Gastrocnemius medialis (tissue), 4 donors: ENCODE measurements at regions of chr11 and their contacts with region 1.

Region 1: DNA sequence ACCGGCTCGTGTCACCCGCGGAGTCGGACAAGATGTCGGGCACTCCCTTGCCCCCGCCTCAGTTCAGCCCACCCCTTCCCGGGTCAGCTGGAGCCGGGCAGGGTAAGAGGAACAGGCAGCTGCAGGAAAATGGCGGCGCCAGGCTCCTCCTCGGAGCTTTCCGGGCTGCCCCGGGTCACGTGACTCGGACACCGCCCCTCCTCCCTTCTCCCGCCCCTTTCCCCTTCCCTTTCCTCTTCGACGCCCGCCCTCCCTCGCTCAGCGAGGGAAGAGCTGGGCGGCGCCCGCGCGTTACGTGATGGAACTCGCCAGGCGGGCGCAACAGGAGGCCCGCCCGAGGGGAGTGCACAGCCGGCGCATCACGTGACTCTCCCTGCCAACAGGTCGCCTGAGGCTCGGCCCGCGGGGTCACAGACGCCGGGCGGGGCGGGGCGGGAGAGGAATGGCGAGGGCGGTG is at the start of gene PICALM:
- DNase-seq: peak; percentile 98
- ATAC-seq: peak; percentile 79 to 81
- H3K4me3 ChIP-seq: peak within 1 kb of the TSS; percentile 80 to 100 (median 90)
- H3K27ac ChIP-seq: peak within 1 kb of the TSS; percentile 97 to 100 (median 98)
- H3K4me1 ChIP-seq: peaks cover 32 to 35% of the 10 kb centered on the region in 2 donors
- H3K27me3 ChIP-seq: no peaks in the 10 kb centered on the region
- CTCF ChIP-seq: peak in 2 of 5 experiments; percentile 54 to 67
- POLR2A ChIP-seq: peak; percentile 81 to 90
- total RNA-seq, gene PICALM: 82.3 to 125 (median 107) TPM

Region 2: GRCh38 chr11:86174101-86175046 is 105.4 kb after region 1 on chr11:
- in situ Hi-C with region 1: loop called in 1 of 4 experiments (anchors 10 kb)
- intact Hi-C with region 1: loop called (anchors 1 kb)
- DNase-seq: peak; percentile 91 to 95
- ATAC-seq: peak; percentile 98 to 99
- H3K4me3 ChIP-seq: no peak overlapping the region
- H3K27ac ChIP-seq: peak overlapping the region; percentile 83 to 88 (median 85)
- H3K4me1 ChIP-seq: peaks cover 40 to 51% of the 10 kb centered on the region in 2 donors
- H3K27me3 ChIP-seq: no peaks in the 10 kb centered on the region
- CTCF ChIP-seq: peak in 1 of 5 experiments; percentile 14
- POLR2A ChIP-seq: peak in 1 of 2 donors; percentile 12

Region 3: DNA sequence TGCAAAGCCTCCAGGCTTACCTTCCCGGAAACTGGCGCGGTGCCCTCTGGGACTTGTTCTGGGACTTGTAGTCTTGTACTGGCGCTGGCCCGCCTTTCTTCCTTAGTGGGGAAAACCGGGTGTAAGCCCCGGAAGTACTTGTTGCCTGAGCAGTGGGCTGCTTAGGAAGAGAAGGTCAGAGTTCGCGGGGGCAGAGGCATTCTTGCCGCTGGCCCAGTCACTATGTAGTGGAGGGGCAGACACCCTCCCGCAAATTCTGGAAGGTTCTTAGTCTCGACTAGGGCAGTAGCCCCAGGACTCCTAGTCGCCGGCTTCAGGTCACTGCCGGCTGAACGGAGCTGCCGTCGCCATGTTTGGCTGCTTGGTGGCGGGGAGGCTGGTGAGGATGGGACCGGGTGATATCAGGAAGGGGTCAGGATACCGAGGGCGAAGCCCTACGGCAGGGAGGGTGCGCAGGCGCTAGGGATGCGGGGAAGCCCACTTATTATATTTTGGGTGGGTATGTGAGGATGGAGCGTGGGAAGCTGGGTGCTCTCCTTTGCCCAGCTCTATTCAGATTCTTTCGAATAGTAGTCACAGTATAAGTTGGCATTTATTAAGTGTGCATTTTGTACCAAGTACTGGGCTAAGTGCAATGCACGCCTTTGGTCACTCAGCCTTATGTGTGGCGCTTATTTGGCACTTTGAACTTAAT is 233.3 kb after region 1 on chr11 and contains the start of gene HIKESHI:
- in situ Hi-C with region 1: no loop called
- intact Hi-C with region 1: loop called (anchors 5 kb)
- DNase-seq: peak; percentile 99
- ATAC-seq: peak; percentile 99 to 100
- H3K4me3 ChIP-seq: peak within 1 kb of the TSS; percentile 65 to 100 (median 78)
- H3K27ac ChIP-seq: peak within 1 kb of the TSS; percentile 83 to 94 (median 86)
- H3K4me1 ChIP-seq: peaks cover 14 to 28% of the 10 kb centered on the region in 2 donors
- H3K27me3 ChIP-seq: no peaks in the 10 kb centered on the region
- CTCF ChIP-seq: peak in 1 of 5 experiments; percentile 6
- POLR2A ChIP-seq: peak; percentile 43 to 52
- total RNA-seq, gene HIKESHI: 30.1 to 60.9 (median 51.8) TPM